ENCODE measurements at regions of chr3 and their contacts with region 1.

Region 1: DNA sequence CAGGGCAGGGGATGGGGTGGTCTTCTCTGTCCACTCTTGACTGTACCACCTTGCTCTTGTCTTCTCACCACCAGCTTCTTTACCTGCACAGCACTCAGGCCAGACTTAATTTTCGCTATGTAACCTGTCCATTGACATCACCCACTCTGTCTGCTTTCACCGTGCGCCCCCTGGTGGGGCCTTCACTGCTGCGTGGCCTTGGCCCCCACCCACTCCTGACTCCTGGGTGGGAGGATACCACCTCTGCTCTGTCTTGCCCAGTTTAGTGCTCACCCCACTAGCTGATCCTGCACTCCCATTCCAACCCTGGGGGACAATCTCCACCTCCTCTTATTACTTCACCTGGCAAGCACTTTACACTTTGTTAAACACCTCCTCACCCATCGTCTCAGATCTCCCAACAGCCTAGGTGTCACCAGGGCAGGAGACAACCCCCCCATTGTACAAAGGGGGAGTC is 17.7 kb downstream of the PTH1R start:
- DNase-seq: peak; percentile 86
- H3K4me3 Mint-ChIP-seq: no peak overlapping the region
- H3K27ac Mint-ChIP-seq: no peak overlapping the region
- H3K4me1 Mint-ChIP-seq: peaks cover 3% of the 10 kb centered on the region
- H3K27me3 Mint-ChIP-seq: peaks cover 97% of the 10 kb centered on the region

Region 2: GRCh38 chr3:46705022-46705530 is 190.2 kb before region 1 on chr3:
- CTCF ChIA-PET with region 1: interaction called, 28 read pairs
- DNase-seq: peak; percentile 78
- H3K4me3 Mint-ChIP-seq: no peak overlapping the region
- H3K27ac Mint-ChIP-seq: no peak overlapping the region
- H3K4me1 Mint-ChIP-seq: peaks cover 10% of the 10 kb centered on the region
- H3K27me3 Mint-ChIP-seq: peaks cover 50% of the 10 kb centered on the region